Activated T-helper 2 cell treated with anti-CD3 and anti-CD28 coated beads, Interferon-gamma antibody, Interleukin-2, Interleukin-4, amounts not matched to agents 10 μg/mL and 5 μg/mL and 100 μg/mL, durations not matched to agents 14 hours and 24 hours and 36 hours (primary cell): ENCODE measurements at regions of chr5 and their contacts with region 1.

Region 1: DNA sequence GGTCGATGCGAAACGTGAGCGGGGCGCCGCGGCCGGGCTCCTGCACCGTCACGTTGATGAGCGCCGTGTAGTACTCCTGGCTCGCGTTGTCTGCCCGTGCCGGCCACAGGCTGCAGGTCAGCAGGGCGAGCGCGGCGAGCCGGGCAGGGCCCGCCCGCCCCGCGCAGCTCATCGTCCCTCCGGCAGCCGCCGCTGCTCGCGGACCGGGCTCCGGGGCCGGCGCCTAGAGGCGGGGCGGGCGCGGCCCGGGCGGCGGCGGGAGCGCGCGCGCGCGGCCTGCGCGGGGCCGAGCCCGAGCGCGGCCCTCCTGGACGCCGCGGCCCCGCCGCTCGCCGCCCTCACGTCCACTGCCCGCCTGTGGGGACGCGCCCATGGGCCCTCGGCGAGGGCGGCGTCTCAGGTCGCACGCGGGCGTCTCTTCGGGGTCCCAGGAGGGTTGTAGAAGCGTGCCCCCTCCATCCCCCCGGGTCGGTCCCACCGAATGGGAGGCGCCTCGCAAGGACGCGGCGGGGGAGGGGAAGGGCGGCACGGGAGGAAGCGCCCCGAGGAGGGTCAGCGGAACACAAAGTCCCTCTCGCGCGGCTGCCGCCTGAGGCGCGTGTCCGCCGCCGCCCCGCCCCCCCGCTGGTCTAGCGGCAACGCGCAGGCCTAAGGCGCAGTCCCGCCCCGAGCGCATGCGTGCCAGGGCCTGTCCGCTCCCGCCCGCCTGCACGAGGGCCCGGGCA is at the start of gene RNF130:
- DNase-seq: peak; percentile 78
- H3K4me3 Mint-ChIP-seq: peak within 1 kb of the TSS; percentile 80
- H3K27ac Mint-ChIP-seq: no peak within 1 kb of the TSS
- H3K4me1 Mint-ChIP-seq: peaks cover 13% of the 10 kb centered on the region
- H3K27me3 Mint-ChIP-seq: peaks cover 55% of the 10 kb centered on the region
- total RNA-seq, gene RNF130: 10.0 and 10.3 TPM in 2 replicates

Region 2: GRCh38 chr5:180090098-180090768 is 18.5 kb after region 1 on chr5:
- intact Hi-C with region 1: loop called (anchors 1 kb)
- DNase-seq: peak; percentile 64
- H3K4me3 Mint-ChIP-seq: peak overlapping the region; percentile 78
- H3K27ac Mint-ChIP-seq: peak overlapping the region; percentile 28
- H3K4me1 Mint-ChIP-seq: peaks cover 14% of the 10 kb centered on the region
- H3K27me3 Mint-ChIP-seq: peaks cover 5% of the 10 kb centered on the region

Region 3: GRCh38 chr5:180241600-180241999 is 169.9 kb after region 1 on chr5:
- intact Hi-C with region 1: no loop called
- DNase-seq: no peak
- H3K4me3 Mint-ChIP-seq: no peak overlapping the region
- H3K27ac Mint-ChIP-seq: no peak overlapping the region
- H3K4me1 Mint-ChIP-seq: no peaks in the 10 kb centered on the region
- H3K27me3 Mint-ChIP-seq: no peaks in the 10 kb centered on the region